Upper lobe of right lung (tissue), 1 donor: ENCODE measurements at regions of chr6 and their contacts with region 1.

Region 1: GRCh38 chr6:133184798-133185372 is 56.3 kb upstream of the EYA4 start:
- DNase-seq: no peak
- ATAC-seq: no peak
- H3K4me3 ChIP-seq: no peak overlapping the region
- H3K27ac ChIP-seq: no peak overlapping the region
- H3K4me1 ChIP-seq: no peaks in the 10 kb centered on the region
- H3K27me3 ChIP-seq: no peaks in the 10 kb centered on the region
- CTCF ChIP-seq: peak; percentile 61

Region 2: DNA sequence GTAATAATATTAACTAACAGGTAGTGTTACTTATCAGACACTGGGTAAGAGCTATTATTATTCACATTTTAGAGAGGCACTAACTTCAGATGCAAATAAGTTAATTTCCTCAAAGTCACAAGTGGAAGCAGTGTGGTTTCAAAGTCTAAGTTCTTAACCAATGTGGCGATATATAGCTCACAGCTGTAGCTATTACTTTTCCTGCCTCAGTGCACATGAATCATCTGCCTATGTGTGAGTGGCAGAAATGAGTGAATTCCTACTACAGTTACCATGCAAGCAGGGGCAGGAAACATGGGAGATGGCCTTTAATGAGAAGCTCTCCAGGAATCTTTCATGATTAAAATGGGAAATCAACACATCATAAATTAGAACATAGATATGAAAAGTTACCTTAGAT is 69.9 kb before region 1 on chr6:
- intact Hi-C with region 1: no loop called
- DNase-seq: no peak
- ATAC-seq: no peak
- H3K4me3 ChIP-seq: no peak overlapping the region
- H3K27ac ChIP-seq: no peak overlapping the region
- H3K4me1 ChIP-seq: no peaks in the 10 kb centered on the region
- H3K27me3 ChIP-seq: no peaks in the 10 kb centered on the region
- CTCF ChIP-seq: no peak

Region 3: GRCh38 chr6:133512410-133513016 is 327.6 kb after region 1 on chr6:
- intact Hi-C with region 1: loop called (anchors 10 kb)
- DNase-seq: no peak
- ATAC-seq: peak; percentile 71
- H3K4me3 ChIP-seq: no peak overlapping the region
- H3K27ac ChIP-seq: no peak overlapping the region
- H3K4me1 ChIP-seq: no peaks in the 10 kb centered on the region
- H3K27me3 ChIP-seq: peaks cover 4% of the 10 kb centered on the region
- CTCF ChIP-seq: peak; percentile 54